CD8-positive, alpha-beta T cell (primary cell): ENCODE measurements at regions of chr3 and their contacts with region 1.

Region 1: GRCh38 chr3:183227586-183227985 is 25.5 kb upstream of the B3GNT5 start:
- DNase-seq: no peak
- ATAC-seq: no peak
- H3K4me3 ChIP-seq: no peak overlapping the region
- H3K4me3 Mint-ChIP-seq: no peak overlapping the region
- H3K27ac ChIP-seq: no peak overlapping the region
- H3K27ac Mint-ChIP-seq: no peak overlapping the region
- H3K4me1 ChIP-seq: peaks cover 9% of the 10 kb centered on the region
- H3K4me1 Mint-ChIP-seq: peaks cover 13% of the 10 kb centered on the region
- H3K27me3 ChIP-seq: no peaks in the 10 kb centered on the region
- H3K27me3 Mint-ChIP-seq: no peaks in the 10 kb centered on the region
- CTCF ChIP-seq: no peak

Region 2: GRCh38 chr3:183195266-183195665 is 32.3 kb before region 1 on chr3:
- CTCF ChIA-PET with region 1: no interaction called
- POLR2A ChIA-PET with region 1: no interaction called
- intact Hi-C with region 1: no loop called
- DNase-seq: no peak
- ATAC-seq: no peak
- H3K4me3 ChIP-seq: no peak overlapping the region
- H3K4me3 Mint-ChIP-seq: no peak overlapping the region
- H3K27ac ChIP-seq: no peak overlapping the region
- H3K27ac Mint-ChIP-seq: no peak overlapping the region
- H3K4me1 ChIP-seq: no peaks in the 10 kb centered on the region
- H3K4me1 Mint-ChIP-seq: no peaks in the 10 kb centered on the region
- H3K27me3 ChIP-seq: no peaks in the 10 kb centered on the region
- H3K27me3 Mint-ChIP-seq: no peaks in the 10 kb centered on the region
- CTCF ChIP-seq: no peak

Region 3: DNA sequence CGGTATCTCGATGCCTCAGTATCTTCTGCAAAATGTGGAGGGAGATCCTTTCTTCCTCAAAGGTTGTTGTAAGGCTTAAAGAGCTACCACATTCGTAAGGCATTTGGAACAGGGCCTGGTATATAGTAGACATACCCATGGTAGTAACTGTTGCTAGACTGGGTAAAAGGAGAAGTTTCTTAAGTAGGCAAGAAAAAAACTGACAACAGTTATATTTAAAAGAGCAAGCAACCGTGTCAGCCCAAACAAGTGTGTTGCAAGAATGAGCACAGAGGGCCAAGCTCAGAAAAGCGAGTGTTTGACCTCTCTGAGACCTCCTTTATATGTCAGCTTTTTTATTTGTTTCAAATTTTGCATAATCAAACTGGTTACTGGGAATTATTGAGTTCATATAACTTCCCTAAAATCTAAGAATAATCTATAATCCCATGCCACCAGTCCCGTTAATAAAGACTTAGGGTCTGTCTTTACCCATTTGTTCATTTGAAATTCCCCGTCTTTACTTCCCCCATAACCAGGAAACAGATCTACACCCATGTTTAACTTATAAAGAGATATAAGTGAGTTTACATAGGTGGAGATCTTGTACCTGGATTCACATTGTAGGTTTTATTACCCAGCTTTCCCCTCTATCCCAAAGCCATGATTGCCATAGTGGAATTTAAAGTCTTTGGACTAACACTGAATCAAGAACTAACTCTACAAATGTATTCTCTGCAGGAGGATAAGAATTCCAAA is 32.8 kb after region 1 on chr3:
- CTCF ChIA-PET with region 1: interaction called, 3 read pairs
- POLR2A ChIA-PET with region 1: no interaction called
- intact Hi-C with region 1: loop called in 1 of 2 experiments (anchors 5 kb)
- DNase-seq: no peak
- ATAC-seq: no peak
- H3K4me3 ChIP-seq: no peak overlapping the region
- H3K4me3 Mint-ChIP-seq: no peak overlapping the region
- H3K27ac ChIP-seq: no peak overlapping the region
- H3K27ac Mint-ChIP-seq: no peak overlapping the region
- H3K4me1 ChIP-seq: no peaks in the 10 kb centered on the region
- H3K4me1 Mint-ChIP-seq: no peaks in the 10 kb centered on the region
- H3K27me3 ChIP-seq: peaks cover 0 to 3% of the 10 kb centered on the region in 2 experiments
- H3K27me3 Mint-ChIP-seq: peaks cover 30% of the 10 kb centered on the region
- CTCF ChIP-seq: no peak